ENCODE measurements at regions of chr7 and their contacts with region 1.

Region 1: GRCh38 chr7:151261529-151261928 is 13.0 kb upstream of the SMARCD3 start:
- DNase-seq: no peak
- ATAC-seq: no peak
- H3K4me3 Mint-ChIP-seq: no peak overlapping the region
- H3K27ac Mint-ChIP-seq: no peak overlapping the region
- H3K4me1 Mint-ChIP-seq: no peaks in the 10 kb centered on the region
- H3K27me3 Mint-ChIP-seq: peaks cover 13% of the 10 kb centered on the region

Region 2: DNA sequence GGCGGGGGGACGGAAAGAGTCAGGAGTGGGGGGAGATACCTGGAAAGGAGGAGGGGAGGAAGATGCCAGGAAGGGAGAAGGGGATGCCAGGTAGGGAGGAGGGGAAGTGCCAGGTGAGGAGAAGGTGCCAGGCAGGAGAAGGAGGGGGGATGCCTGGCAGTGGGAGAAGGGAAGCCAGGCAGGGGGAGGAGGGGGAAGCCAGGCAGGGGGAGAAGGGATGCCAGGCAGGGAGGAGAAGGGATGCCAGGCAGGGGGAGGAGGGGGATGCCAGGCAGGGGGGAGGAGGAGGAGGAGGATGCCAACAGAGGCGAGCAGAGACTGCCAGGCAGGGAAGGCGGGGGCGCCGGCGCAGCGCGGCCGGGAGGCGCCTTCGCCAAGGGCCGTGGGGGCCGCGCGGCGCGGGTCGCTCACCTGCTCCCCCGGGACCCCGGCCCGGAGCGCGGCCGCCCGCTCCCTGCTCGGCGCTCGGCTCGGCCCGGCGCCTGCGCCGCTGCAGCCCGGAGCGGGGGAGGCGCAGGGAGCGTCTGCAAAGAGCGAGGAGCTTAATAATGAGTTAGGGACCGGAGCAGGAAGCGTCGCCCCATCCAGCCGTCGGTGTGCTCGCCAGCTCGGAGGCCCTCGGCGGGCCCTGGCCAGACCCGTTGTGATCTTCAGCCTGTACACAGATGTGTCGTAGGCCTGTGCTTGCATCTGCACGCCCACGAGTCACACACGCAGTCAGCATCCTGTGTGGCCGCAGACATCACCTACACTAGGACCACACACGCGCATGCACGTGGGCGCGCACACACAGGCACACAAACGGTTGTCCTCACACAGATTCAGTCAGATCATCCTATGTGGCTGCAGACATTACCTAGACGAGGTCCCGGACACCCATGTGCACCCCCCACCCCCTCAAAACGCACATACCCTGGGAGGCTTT is 15.4 kb after region 1 on chr7:
- CTCF ChIA-PET with region 1: no interaction called
- POLR2A ChIA-PET with region 1: interaction called, 10 read pairs
- intact Hi-C with region 1: no loop called
- DNase-seq: peak; percentile 80
- ATAC-seq: peak; percentile 88
- H3K4me3 Mint-ChIP-seq: peak overlapping the region; percentile 63
- H3K27ac Mint-ChIP-seq: peak overlapping the region; percentile 77
- H3K4me1 Mint-ChIP-seq: peaks cover 19% of the 10 kb centered on the region
- H3K27me3 Mint-ChIP-seq: peaks cover 5% of the 10 kb centered on the region

Region 3: DNA sequence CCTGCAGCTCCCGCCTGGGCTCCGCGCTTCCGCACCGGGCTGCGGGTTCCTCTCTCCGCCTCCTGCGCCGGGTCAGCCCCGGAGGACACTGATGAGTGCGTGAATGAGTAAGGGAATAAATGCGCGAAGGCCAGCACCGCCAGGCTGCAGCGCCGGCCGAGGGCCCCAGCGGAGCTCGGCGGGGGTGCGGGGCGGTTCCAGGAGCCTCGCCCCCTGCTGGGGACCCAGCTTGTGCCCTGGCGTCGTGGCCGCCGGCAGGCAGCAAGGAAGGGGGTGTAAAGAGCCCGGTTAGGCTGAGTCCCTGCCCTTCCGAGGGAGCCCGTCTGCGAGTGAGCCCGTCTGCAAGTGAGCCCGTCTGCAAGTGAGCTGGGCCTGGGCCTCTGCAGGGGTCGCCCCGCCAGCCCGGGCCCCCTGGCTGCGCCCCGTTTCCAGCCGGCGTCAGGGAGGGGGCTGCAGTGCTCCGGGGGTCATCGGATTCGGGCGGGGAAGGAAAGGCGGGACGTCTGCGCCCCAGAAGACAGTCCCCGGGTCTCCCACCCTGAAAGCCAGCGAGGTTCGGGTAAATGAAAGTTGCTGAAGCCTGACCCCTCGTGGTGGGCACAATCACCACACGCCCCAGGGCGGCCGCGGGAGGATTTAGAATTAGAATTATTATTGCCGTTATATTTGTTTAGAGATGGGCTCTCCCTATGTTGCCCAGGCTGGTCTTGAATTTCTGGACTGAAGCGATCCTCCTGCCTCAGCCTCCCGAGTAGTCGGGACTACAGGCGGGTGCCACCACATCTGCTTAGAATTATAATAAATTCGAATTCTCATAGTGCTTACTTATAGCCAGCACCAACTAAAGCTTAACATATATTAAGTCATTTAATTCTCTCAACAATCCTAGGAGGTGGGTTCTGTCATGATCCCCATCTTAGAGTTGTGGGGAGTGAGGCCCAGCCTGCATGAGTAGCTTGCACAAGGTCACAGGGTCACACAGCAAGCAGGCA is 187.0 kb after region 1 on chr7:
- CTCF ChIA-PET with region 1: no interaction called
- POLR2A ChIA-PET with region 1: no interaction called
- intact Hi-C with region 1: no loop called
- DNase-seq: peak; percentile 87
- ATAC-seq: peak; percentile 79
- H3K4me3 Mint-ChIP-seq: peak overlapping the region; percentile 59
- H3K27ac Mint-ChIP-seq: no peak overlapping the region
- H3K4me1 Mint-ChIP-seq: peaks cover 12% of the 10 kb centered on the region
- H3K27me3 Mint-ChIP-seq: peaks cover 4% of the 10 kb centered on the region

Measured in activated CD4-positive, alpha-beta T cell treated with anti-CD3 and anti-CD28 coated beads for 36 hours (primary cell).